BJ (cell line): ENCODE measurements at regions of chr18 and their contacts with region 1.

Region 1: DNA sequence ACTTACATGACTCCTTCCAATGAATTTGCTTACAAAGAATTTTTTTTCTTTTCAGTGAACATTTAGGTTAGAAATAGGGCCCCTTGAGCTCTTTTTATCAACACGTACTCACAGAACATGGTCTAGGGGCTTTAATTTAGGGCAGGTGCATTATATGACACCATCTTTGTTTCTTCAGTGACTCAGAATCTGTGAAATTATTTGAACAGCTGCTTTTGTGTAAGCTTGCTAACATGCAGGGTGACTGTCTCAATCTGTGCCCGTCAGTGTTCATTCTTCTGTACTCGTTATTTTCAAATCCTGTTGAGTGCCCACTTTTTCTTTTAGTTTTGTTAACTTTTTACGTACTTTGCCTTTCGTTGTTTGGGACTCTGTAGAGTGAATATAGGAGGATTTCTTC is 52.8 kb upstream of the CABYR start:
- DNase-seq: no peak
- H3K4me3 ChIP-seq: no peak overlapping the region
- H3K27me3 ChIP-seq: no peaks in the 10 kb centered on the region
- CTCF ChIP-seq: no peak

Region 2: GRCh38 chr18:24075731-24076130 is 10.4 kb before region 1 on chr18:
- CTCF ChIA-PET with region 1: interaction called, 13 read pairs
- POLR2A ChIA-PET with region 1: no interaction called
- DNase-seq: no peak
- H3K4me3 ChIP-seq: no peak overlapping the region
- H3K27me3 ChIP-seq: no peaks in the 10 kb centered on the region
- CTCF ChIP-seq: no peak